Mammary epithelial cell (primary cell): ENCODE measurements at regions of chr5 and their contacts with region 1.

Region 1: GRCh38 chr5:96336351-96336985 is 96.6 kb downstream of the PCSK1 start:
- DNase-seq: peak; percentile 75
- H3K4me3 ChIP-seq: no peak overlapping the region
- H3K27ac ChIP-seq: peak overlapping the region; percentile 74
- H3K4me1 ChIP-seq: peaks cover 35% of the 10 kb centered on the region
- H3K27me3 ChIP-seq: no peaks in the 10 kb centered on the region
- CTCF ChIP-seq: peak; percentile 92 to 94

Region 2: GRCh38 chr5:95781101-95781583 is 555.3 kb before region 1 on chr5:
- CTCF ChIA-PET with region 1: no interaction called
- dilution Hi-C with region 1: no loop called
- in situ Hi-C with region 1: no loop called
- intact Hi-C with region 1: loop called (anchors 1 kb)
- DNase-seq: peak; percentile 57
- H3K4me3 ChIP-seq: no peak overlapping the region
- H3K27ac ChIP-seq: no peak overlapping the region
- H3K4me1 ChIP-seq: no peaks in the 10 kb centered on the region
- H3K27me3 ChIP-seq: no peaks in the 10 kb centered on the region
- CTCF ChIP-seq: peak; percentile 80 to 92

Region 3: GRCh38 chr5:95975703-95976102 is 360.8 kb before region 1 on chr5:
- CTCF ChIA-PET with region 1: no interaction called
- dilution Hi-C with region 1: no loop called
- in situ Hi-C with region 1: no loop called
- intact Hi-C with region 1: no loop called
- DNase-seq: no peak
- H3K4me3 ChIP-seq: no peak overlapping the region
- H3K27ac ChIP-seq: no peak overlapping the region
- H3K4me1 ChIP-seq: no peaks in the 10 kb centered on the region
- H3K27me3 ChIP-seq: no peaks in the 10 kb centered on the region
- CTCF ChIP-seq: no peak

Region 4: DNA sequence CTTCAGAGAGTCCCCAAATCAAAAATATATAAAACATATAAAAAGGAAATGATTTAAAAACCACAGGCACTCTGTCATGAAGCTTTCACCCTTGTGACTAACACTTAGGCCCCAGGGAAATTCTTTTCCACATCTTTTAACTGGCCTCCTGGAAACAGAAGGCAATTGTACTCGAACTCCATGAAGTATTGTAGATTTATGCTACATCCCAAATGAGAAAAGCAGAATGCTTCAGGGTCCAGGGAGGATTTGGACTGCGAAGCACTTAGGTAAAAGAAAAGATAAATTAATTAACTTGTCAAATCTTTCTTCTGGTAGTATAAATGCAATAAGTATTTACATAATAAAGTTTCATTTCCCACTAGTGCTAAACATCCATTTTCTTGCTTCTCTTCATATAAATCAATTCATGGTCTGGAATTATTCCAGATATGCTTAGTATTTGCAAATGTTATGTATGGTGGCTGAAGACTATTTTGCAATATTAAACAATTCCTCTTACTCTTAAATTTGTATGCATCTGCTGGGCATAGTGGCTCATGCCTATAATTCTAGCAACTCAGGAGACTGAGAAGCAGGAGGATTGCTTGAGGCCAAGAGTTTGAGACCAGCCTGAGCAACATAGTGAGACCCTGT is 309.9 kb before region 1 on chr5:
- CTCF ChIA-PET with region 1: no interaction called
- dilution Hi-C with region 1: no loop called
- in situ Hi-C with region 1: no loop called
- intact Hi-C with region 1: loop called (anchors 2 kb)
- DNase-seq: peak; percentile 91
- H3K4me3 ChIP-seq: peak overlapping the region in 1 of 3 experiments; percentile 25
- H3K27ac ChIP-seq: peak overlapping the region; percentile 92
- H3K4me1 ChIP-seq: peaks cover 59% of the 10 kb centered on the region
- H3K27me3 ChIP-seq: no peaks in the 10 kb centered on the region
- CTCF ChIP-seq: no peak

Region 5: DNA sequence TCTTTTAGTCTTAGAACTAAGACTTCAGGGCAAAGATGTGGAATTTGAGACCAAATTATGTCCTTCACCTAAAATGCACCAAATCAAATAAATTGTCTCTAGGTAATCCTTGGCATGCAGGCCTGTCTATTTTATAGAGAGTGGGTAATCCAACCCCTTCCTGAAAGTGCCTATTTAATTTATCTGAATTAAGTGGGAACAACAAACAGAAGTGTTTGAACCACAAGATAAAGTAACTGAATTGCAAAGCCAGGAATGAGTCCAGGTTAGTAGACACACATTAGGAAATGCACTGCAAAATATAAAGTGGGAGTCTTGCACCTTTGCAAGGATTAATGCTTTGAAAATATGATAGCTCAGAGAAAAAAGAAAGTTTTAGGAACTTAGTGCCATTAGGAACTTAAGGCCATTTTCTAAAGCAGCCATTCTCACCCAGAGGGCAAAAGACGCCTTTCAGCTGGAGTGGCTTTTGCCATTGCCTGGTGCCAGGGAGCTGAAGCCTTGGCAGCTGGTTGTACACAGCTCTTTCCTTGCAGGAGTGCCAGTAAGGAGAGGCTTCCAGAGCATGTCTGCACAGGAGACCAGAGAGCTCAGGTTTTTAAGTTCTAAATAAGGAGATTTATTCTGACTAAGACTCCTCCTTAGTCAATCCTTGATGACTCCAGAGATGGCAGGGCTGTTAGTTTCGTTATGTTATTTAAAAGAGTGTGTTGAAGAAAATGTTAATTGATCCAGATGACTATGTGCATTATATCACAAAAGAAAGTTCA is 223.1 kb before region 1 on chr5:
- CTCF ChIA-PET with region 1: interaction called, 7 read pairs
- dilution Hi-C with region 1: no loop called
- in situ Hi-C with region 1: no loop called
- intact Hi-C with region 1: loop called (anchors 2 kb)
- DNase-seq: peak; percentile 89
- H3K4me3 ChIP-seq: peak overlapping the region in 2 of 3 experiments; percentile 8
- H3K27ac ChIP-seq: peak overlapping the region; percentile 88
- H3K4me1 ChIP-seq: peaks cover 47% of the 10 kb centered on the region
- H3K27me3 ChIP-seq: no peaks in the 10 kb centered on the region
- CTCF ChIP-seq: no peak

Region 6: GRCh38 chr5:96220610-96221390 is 115.7 kb before region 1 on chr5:
- CTCF ChIA-PET with region 1: no interaction called
- dilution Hi-C with region 1: no loop called
- in situ Hi-C with region 1: no loop called
- intact Hi-C with region 1: loop called (anchors 1 kb)
- DNase-seq: peak; percentile 88
- H3K4me3 ChIP-seq: peak overlapping the region in 1 of 3 experiments; percentile 14
- H3K27ac ChIP-seq: peak overlapping the region; percentile 95
- H3K4me1 ChIP-seq: peaks cover 25% of the 10 kb centered on the region
- H3K27me3 ChIP-seq: no peaks in the 10 kb centered on the region
- CTCF ChIP-seq: no peak

Region 7: GRCh38 chr5:96408276-96408777 is 71.9 kb after region 1 on chr5:
- CTCF ChIA-PET with region 1: no interaction called
- dilution Hi-C with region 1: no loop called
- in situ Hi-C with region 1: no loop called
- intact Hi-C with region 1: no loop called
- DNase-seq: peak; percentile 80
- H3K4me3 ChIP-seq: no peak overlapping the region
- H3K27ac ChIP-seq: no peak overlapping the region
- H3K4me1 ChIP-seq: peaks cover 11% of the 10 kb centered on the region
- H3K27me3 ChIP-seq: no peaks in the 10 kb centered on the region
- CTCF ChIP-seq: no peak